ENCODE measurements at regions of chr7 and their contacts with region 1.

Region 1: GRCh38 chr7:108525985-108526767 is at the start of gene PNPLA8:
- DNase-seq: peak; percentile 98
- H3K4me3 Mint-ChIP-seq: peak within 1 kb of the TSS; percentile 83
- H3K27ac Mint-ChIP-seq: peak within 1 kb of the TSS; percentile 98
- H3K4me1 Mint-ChIP-seq: peaks cover 28% of the 10 kb centered on the region
- H3K27me3 Mint-ChIP-seq: no peaks in the 10 kb centered on the region
- CTCF ChIP-seq: no peak
- total RNA-seq, gene PNPLA8: 6.9 and 8.3 TPM in 2 replicates

Region 2: DNA sequence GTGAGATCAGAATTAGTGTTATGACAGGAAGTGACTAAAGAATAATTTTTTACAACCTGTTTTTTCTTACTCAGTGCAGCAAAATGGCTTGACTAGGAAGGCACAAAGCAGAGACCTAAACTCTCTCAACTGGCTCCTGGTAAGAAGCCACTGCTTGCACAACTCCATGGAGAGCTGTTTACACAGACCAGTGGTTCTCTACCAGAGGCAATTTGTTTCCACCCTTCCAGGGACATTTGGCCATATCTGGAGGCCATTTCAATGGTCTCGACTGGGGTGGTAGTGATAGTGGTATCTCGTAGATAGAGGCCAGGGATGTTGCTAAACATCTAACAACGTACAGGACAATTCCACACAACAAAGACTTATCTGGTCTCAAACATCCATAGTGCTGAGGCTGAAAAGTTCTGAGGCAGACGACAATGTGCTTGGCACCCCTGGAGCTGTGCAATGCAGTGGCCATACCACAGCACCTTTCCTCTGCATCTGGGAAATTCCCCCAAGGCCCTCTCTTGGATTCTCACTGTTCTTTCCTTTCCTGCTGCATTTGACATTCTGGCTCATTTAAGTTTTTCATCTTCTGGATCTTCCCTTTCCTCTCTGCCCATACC is 290.6 kb before region 1 on chr7:
- CTCF ChIA-PET with region 1: no interaction called
- intact Hi-C with region 1: no loop called
- DNase-seq: no peak
- H3K4me3 Mint-ChIP-seq: peak overlapping the region; percentile 32
- H3K27ac Mint-ChIP-seq: peak overlapping the region; percentile 33
- H3K4me1 Mint-ChIP-seq: peaks cover 28% of the 10 kb centered on the region
- H3K27me3 Mint-ChIP-seq: no peaks in the 10 kb centered on the region
- CTCF ChIP-seq: no peak

Region 3: GRCh38 chr7:108263425-108263824 is 262.8 kb before region 1 on chr7:
- CTCF ChIA-PET with region 1: no interaction called
- intact Hi-C with region 1: no loop called
- DNase-seq: no peak
- H3K4me3 Mint-ChIP-seq: no peak overlapping the region
- H3K27ac Mint-ChIP-seq: no peak overlapping the region
- H3K4me1 Mint-ChIP-seq: no peaks in the 10 kb centered on the region
- H3K27me3 Mint-ChIP-seq: no peaks in the 10 kb centered on the region
- CTCF ChIP-seq: no peak

Region 4: DNA sequence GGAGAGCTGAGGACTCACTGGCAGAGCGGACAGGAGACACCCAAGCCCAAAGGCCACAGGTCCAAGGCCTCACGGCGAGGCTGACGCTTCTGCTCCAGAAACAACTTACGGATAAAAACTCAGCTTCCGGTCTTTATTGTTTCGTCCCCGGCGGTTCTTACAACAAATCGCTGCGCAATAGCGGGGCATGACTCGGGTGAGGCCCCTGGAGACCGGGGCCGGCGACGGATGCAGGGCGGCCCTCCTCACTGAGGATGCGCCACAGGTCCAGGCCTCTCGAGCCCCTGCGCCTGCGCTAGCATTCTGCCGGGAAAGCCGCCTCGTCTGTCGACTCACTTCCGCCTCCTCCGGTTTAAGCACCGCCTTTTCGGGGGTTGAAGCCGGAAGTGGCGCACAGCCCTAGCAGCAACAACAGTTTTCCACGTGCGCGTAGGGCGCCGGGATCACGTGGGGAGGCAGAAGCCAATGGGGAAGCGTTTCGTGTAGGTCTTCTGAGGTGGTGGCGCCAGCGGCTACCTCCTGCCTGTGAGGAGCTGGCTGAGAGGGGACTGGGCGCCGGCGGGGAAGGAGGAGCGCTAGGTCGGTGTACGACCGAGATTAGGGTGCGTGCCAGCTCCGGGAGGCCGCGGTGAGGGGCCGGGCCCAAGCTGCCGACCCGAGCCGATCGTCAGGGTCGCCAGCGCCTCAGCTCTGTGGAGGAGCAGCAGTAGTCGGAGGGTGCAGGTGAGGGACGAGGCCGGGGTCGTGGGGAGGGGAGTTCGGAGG is 43.4 kb after region 1 on chr7 and contains the starts of genes DNAJB9 and THAP5:
- CTCF ChIA-PET with region 1: no interaction called
- intact Hi-C with region 1: loop called (anchors 5 kb)
- DNase-seq: peak; percentile 95
- H3K4me3 Mint-ChIP-seq: peak within 1 kb of the TSS; percentile 99
- H3K27ac Mint-ChIP-seq: peak within 1 kb of the TSS; percentile 99
- H3K4me1 Mint-ChIP-seq: no peaks in the 10 kb centered on the region
- H3K27me3 Mint-ChIP-seq: no peaks in the 10 kb centered on the region
- CTCF ChIP-seq: no peak
- total RNA-seq, gene DNAJB9: 13.3 TPM in 2 replicates
- total RNA-seq, gene THAP5: 15.8 and 18.3 TPM in 2 replicates

Measured in Calu3 (cell line).